Activated CD4-positive, alpha-beta T cell treated with anti-CD3 and anti-CD28 coated beads for 36 hours (primary cell): ENCODE measurements at regions of chr17 and their contacts with region 1.

Region 1: GRCh38 chr17:50161023-50161910 is 4.5 kb upstream of the SGCA start:
- DNase-seq: peak; percentile 98
- ATAC-seq: peak; percentile 96
- H3K4me3 Mint-ChIP-seq: peak overlapping the region; percentile 78
- H3K27ac Mint-ChIP-seq: peak overlapping the region; percentile 99
- H3K4me1 Mint-ChIP-seq: peaks cover 42% of the 10 kb centered on the region
- H3K27me3 Mint-ChIP-seq: no peaks in the 10 kb centered on the region

Region 2: DNA sequence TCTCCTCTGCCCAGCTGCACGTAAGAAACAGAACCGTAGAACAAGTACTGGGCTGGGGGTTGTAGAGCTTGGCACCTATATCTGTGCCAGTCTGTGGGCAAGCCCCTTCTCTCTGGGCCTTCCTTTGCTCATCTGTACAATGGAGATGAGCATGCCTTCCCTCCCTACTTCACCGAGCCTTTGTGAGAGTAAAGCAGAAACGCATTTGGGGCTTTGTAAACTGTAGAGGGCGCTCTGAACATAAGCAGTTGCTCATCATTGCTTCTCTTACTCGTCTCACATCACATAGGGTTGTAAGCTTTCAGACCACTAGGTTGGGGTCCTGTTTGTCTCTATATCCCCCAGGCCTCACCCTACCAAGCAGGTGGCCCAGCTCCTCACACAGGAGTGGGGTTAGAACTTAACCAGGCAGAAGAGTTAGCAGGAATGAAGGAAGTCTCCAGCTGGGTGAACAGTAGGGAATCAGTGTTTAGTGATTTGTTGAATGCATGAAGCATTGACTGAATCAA is 46.4 kb before region 1 on chr17:
- CTCF ChIA-PET with region 1: interaction called, 9 read pairs
- POLR2A ChIA-PET with region 1: no interaction called
- intact Hi-C with region 1: loop called (anchors 1 to 5 kb)
- DNase-seq: peak; percentile 65
- ATAC-seq: peak; percentile 76
- H3K4me3 Mint-ChIP-seq: no peak overlapping the region
- H3K27ac Mint-ChIP-seq: no peak overlapping the region
- H3K4me1 Mint-ChIP-seq: peaks cover 7% of the 10 kb centered on the region
- H3K27me3 Mint-ChIP-seq: peaks cover 31% of the 10 kb centered on the region